ENCODE measurements at regions of chr1 and their contacts with region 1.

Region 1: DNA sequence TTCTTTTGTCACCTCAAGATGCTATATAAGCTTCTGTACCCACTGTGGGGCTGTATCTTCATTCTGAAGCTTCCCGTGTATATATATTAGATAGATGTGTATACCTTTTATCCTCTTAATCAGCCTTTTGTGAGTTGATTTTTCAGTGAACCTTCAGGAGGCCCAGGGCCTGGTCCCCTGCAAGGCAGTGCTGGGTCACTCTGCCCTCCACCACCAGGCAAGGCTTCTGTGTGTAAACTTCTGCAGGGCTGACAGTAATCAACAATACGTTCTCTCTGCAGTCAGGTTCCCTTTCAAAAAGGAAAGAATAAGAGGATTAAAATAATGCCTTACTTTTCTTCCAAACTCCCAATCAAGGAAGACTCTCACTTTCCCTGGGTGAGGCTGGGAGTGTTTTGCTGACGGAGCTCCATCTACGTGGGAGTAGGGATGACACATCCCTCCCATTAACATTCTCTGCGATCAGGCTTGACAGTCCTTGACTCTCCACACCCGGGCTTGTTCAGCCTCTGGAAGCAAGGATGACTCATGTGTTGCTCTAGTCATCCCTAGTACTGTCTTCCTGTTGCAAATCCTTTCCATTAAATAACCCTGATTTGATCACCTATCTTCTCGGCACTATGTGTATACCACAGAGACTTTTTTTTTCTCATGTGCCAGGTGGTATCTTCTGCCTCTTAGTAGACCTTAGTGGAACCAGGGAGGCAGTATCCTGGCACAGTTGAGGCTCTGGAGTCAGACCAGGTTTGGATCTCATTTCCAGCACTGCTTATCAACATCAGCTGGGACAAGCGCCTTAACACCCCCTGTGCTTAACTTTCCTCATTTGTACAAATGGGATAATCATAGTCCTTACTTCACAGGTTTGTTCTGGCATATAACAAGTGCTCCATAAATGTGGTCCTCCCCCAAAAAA is 70.3 kb upstream of the KCNK1 start:
- DNase-seq: no peak
- ATAC-seq: peak; percentile 36
- H3K4me3 ChIP-seq: no peak overlapping the region
- H3K27ac ChIP-seq: no peak overlapping the region
- H3K4me1 ChIP-seq: no peaks in the 10 kb centered on the region
- H3K27me3 ChIP-seq: no peaks in the 10 kb centered on the region
- CTCF ChIP-seq: no peak

Region 2: DNA sequence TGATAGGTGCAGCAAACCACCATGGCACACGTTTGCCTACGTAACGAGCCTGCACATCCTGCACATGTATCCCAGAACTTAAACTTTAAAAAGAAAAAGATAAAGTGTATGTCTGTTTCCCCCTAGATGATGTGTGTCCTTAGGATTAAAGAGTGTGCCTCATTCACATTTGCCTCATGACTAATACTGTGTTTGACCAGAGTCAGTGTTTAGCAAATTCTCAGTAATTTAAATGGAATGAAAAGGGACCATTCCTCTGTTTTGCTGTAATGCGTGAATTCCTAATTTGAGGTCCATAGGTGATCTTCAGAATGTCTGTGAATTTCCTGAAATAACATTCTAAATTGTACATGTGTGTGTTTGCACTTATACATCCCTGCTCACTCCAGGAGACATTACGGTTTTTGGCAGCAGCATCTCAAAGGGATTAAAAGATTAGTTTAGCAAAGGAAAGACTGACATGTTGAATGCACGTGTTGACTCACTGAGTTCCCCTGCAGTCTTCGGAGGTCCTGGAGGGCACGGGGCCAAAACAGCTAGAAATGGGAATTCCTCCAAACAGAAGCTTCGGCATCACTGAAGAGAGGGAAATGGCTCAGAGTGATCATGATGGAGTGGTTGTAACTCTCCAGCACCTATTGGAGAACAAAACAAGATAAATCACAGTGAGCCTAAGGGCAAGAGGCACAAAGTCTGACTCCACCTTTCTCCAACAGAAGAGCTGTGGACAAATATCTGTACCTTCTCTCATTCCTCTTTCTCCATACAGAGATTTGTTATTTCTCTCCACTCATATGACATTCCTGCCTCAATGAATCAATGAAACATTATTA is 341.8 kb after region 1 on chr1:
- intact Hi-C with region 1: loop called (anchors 10 kb)
- DNase-seq: no peak
- ATAC-seq: no peak
- H3K4me3 ChIP-seq: no peak overlapping the region
- H3K27ac ChIP-seq: no peak overlapping the region
- H3K4me1 ChIP-seq: no peaks in the 10 kb centered on the region
- H3K27me3 ChIP-seq: no peaks in the 10 kb centered on the region
- CTCF ChIP-seq: no peak

Measured in upper lobe of right lung (tissue), 1 donor.